AG04450 (cell line): ENCODE measurements at regions of chr1 and their contacts with region 1.

Region 1: DNA sequence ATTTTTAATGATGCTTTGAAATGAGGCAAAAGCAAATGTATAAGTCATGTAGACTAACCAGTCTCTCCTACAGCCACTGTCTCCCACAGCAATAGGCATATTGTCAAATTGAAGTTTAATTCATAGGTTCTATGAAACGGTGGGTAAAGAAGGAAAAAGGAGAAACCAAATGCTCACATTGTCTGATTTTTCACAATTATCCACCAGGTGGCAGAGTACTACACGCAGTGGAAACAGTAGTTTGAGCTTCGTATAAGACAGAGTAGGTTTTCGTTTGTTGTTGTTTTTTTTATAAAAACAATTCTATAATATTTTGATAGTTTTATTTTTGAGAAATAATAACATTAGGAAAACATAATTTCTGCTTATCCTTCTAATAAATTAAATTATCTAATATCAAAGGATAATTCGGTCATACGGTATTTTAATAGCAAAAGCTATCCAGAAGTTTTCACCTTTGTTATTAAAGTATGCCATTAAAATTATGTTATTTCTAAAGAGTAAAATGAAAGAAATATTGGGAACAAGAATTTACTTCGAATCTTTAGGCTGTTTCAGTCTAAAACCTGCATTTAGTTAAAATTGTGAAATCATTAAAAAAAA is 39.1 kb downstream of the TYW3 start:
- DNase-seq: peak; percentile 8
- H3K4me3 ChIP-seq: no peak overlapping the region
- H3K27ac ChIP-seq: no peak overlapping the region
- H3K27me3 ChIP-seq: no peaks in the 10 kb centered on the region
- CTCF ChIP-seq: peak; percentile 76

Region 2: GRCh38 chr1:74717626-74718025 is 54.4 kb before region 1 on chr1:
- CTCF ChIA-PET with region 1: no interaction called
- POLR2A ChIA-PET with region 1: no interaction called
- DNase-seq: no peak
- H3K4me3 ChIP-seq: no peak overlapping the region
- H3K27ac ChIP-seq: no peak overlapping the region
- H3K27me3 ChIP-seq: no peaks in the 10 kb centered on the region
- CTCF ChIP-seq: no peak

Region 3: GRCh38 chr1:74790453-74790852 is 18.4 kb after region 1 on chr1:
- CTCF ChIA-PET with region 1: interaction called, 15 read pairs
- POLR2A ChIA-PET with region 1: no interaction called
- DNase-seq: no peak
- H3K4me3 ChIP-seq: no peak overlapping the region
- H3K27ac ChIP-seq: no peak overlapping the region
- H3K27me3 ChIP-seq: no peaks in the 10 kb centered on the region
- CTCF ChIP-seq: no peak

Region 4: DNA sequence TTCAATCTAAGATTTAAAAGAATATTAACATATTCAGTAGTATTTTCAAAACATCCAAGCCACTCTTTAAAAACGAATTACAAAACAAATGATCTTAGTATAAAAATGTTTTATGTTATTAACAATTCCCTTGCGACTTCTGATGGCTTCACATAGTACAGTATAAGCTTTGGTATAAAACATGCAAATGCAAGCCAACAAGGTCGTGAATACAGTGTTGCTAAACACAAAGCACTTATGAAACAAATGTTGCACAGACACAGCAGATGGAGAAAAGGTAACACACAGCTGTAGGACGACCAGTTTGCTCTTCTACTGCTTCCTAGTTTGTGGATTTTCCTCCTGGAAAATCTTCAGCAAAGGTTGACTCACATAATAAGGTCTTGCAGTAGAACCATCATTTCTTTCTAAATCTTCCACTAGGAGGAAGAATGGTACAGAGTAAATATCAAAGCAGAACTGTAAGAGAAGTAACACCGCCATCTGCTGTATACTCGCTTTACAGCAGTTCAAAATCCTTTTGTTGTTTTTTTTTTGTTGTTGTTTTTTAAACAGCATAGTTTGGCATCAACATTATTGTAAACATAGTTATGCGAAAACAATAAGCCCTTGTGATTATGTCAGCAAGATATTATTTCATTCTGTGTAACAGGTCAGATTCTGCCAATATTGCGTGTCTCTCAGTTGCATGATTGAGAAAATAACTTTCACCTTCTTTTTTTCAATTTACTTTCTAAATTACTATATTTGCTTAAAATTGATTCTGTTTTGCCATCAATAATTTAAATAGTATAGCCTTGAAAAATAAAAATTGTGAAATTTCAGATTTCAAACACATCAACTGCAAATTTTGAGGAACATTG is 431.6 kb after region 1 on chr1:
- CTCF ChIA-PET with region 1: interaction called, 218 read pairs
- POLR2A ChIA-PET with region 1: no interaction called
- DNase-seq: peak; percentile 0
- H3K4me3 ChIP-seq: no peak overlapping the region
- H3K27ac ChIP-seq: no peak overlapping the region
- H3K27me3 ChIP-seq: no peaks in the 10 kb centered on the region
- CTCF ChIP-seq: peak; percentile 85

Region 5: DNA sequence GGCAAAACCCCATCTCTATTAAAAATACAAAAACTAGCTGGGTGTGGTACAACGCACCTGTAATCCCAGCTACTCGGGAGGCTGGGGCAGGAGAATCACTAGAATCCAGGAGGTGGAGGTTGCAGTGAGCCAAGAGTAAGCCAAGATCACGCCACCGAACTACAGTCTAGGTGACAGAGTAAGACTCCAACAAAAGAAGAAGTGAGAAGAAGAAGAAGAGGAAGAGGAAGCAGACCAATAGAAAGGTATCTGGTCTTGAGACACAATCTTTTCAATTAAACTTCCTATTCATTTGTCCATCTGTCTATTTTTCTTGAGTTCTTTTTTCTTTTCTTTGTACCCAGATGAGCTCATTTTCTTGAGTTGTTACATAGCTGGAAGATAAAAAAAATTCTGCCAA is 896.8 kb after region 1 on chr1:
- CTCF ChIA-PET with region 1: no interaction called
- POLR2A ChIA-PET with region 1: no interaction called
- DNase-seq: no peak
- H3K4me3 ChIP-seq: no peak overlapping the region
- H3K27ac ChIP-seq: no peak overlapping the region
- H3K27me3 ChIP-seq: no peaks in the 10 kb centered on the region
- CTCF ChIP-seq: no peak